ENCODE measurements at regions of chr17 and their contacts with region 1.

Region 1: GRCh38 chr17:32006957-32007462 is at the start of gene LRRC37B:
- DNase-seq: peak; percentile 78 to 97 (median 88)
- ATAC-seq: peak; percentile 97 to 99 (median 98)
- H3K4me3 ChIP-seq: peak within 1 kb of the TSS; percentile 55 to 93 (median 84)
- H3K27ac ChIP-seq: peak within 1 kb of the TSS; percentile 35 to 80 (median 64)
- H3K4me1 ChIP-seq: peaks cover 0 to 9% (median 4%) of the 10 kb centered on the region in 3 donors
- H3K27me3 ChIP-seq: no peaks in the 10 kb centered on the region
- CTCF ChIP-seq: peak; percentile 97 to 99 (median 98)
- total RNA-seq, gene LRRC37B: 2.9 to 11.0 (median 5.7) TPM

Region 2: GRCh38 chr17:32136856-32137255 is 129.8 kb after region 1 on chr17:
- intact Hi-C with region 1: loop called in 1 of 3 experiments (anchors 10 kb)
- DNase-seq: no peak
- ATAC-seq: no peak
- H3K4me3 ChIP-seq: no peak overlapping the region
- H3K27ac ChIP-seq: no peak overlapping the region
- H3K4me1 ChIP-seq: peaks cover 0 to 4% (median 3%) of the 10 kb centered on the region in 3 donors
- H3K27me3 ChIP-seq: no peaks in the 10 kb centered on the region
- CTCF ChIP-seq: no peak

Region 3: GRCh38 chr17:32215696-32216095 is 208.7 kb after region 1 on chr17:
- intact Hi-C with region 1: no loop called
- DNase-seq: no peak
- ATAC-seq: no peak
- H3K4me3 ChIP-seq: no peak overlapping the region
- H3K27ac ChIP-seq: no peak overlapping the region
- H3K4me1 ChIP-seq: no peaks in the 10 kb centered on the region
- H3K27me3 ChIP-seq: no peaks in the 10 kb centered on the region
- CTCF ChIP-seq: no peak

Region 4: DNA sequence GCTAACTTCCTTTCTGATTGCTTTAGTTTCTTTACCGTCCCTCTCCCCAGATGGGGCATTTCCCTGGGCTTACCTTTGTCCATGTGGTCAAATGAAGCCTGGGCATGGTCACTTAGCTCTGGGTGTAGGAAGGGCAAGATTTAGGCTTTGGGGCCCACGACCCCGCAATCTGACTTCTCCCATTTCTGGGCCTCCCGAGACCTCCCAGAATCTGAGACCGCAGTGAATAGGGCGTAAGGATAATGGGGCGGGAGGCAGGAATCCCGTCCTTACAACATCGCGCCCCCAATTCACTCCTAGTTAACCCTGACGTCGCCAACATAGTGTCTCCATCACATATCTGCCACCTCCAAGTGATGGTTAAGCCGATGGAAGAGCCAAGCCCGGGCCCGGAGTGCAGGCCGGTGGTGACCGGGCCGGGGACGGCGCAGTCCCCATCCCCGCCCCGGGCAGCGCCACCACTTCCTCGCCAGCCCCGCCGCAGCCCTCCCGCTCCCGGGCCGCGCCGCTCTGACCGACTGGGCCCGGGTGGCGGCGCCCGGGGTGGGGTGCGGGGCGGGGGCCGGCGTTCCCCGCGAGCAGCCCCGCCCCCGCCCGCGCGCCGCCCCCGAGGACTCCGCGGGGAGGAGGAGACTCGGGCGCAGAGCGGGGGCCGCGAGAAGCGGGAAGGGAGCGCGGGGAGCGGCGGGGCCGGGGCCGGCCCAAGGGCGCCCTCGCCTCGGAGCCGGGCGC is 258.3 kb after region 1 on chr17 and contains the start of gene RHBDL3:
- intact Hi-C with region 1: no loop called
- DNase-seq: peak in 2 of 6 donors; percentile 15 to 69
- ATAC-seq: peak; percentile 46 to 71 (median 56)
- H3K4me3 ChIP-seq: peak within 1 kb of the TSS; percentile 46 to 60 (median 57)
- H3K27ac ChIP-seq: no peak within 1 kb of the TSS
- H3K4me1 ChIP-seq: peaks cover 0 to 17% (median 5%) of the 10 kb centered on the region in 3 donors
- H3K27me3 ChIP-seq: no peaks in the 10 kb centered on the region
- CTCF ChIP-seq: no peak
- total RNA-seq, gene RHBDL3: 0.12 to 0.75 (median 0.47) TPM

Measured in pancreas (tissue), 10 donors.